ENCODE measurements at regions of chr2 and their contacts with region 1.

Region 1: GRCh38 chr2:106160786-106161261 is 33.3 kb downstream of the UXS1 start:
- DNase-seq: peak; percentile 75
- ATAC-seq: peak; percentile 66
- H3K4me3 Mint-ChIP-seq: peak overlapping the region; percentile 94
- H3K27ac Mint-ChIP-seq: peak overlapping the region; percentile 100
- H3K4me1 Mint-ChIP-seq: peaks cover 76% of the 10 kb centered on the region
- H3K27me3 Mint-ChIP-seq: no peaks in the 10 kb centered on the region

Region 2: GRCh38 chr2:106140913-106141312 is 19.9 kb before region 1 on chr2:
- CTCF ChIA-PET with region 1: interaction called, 45 read pairs
- DNase-seq: no peak
- ATAC-seq: no peak
- H3K4me3 Mint-ChIP-seq: no peak overlapping the region
- H3K27ac Mint-ChIP-seq: peak overlapping the region; percentile 42
- H3K4me1 Mint-ChIP-seq: peaks cover 71% of the 10 kb centered on the region
- H3K27me3 Mint-ChIP-seq: no peaks in the 10 kb centered on the region

Region 3: GRCh38 chr2:106147159-106147558 is 13.7 kb before region 1 on chr2:
- CTCF ChIA-PET with region 1: interaction called, 45 read pairs
- DNase-seq: no peak
- ATAC-seq: peak; percentile 11
- H3K4me3 Mint-ChIP-seq: peak overlapping the region; percentile 64
- H3K27ac Mint-ChIP-seq: peak overlapping the region; percentile 99
- H3K4me1 Mint-ChIP-seq: peaks cover 81% of the 10 kb centered on the region
- H3K27me3 Mint-ChIP-seq: no peaks in the 10 kb centered on the region

Measured in activated CD8-positive, alpha-beta memory T cell treated with anti-CD3 and anti-CD28 coated beads, Interleukin-2, amount 10 ng/mL, durations not matched to agents 7 days and 5 days (primary cell).